K562 (cell line): ENCODE measurements at regions of chr11 and their contacts with region 1.

Region 1: DNA sequence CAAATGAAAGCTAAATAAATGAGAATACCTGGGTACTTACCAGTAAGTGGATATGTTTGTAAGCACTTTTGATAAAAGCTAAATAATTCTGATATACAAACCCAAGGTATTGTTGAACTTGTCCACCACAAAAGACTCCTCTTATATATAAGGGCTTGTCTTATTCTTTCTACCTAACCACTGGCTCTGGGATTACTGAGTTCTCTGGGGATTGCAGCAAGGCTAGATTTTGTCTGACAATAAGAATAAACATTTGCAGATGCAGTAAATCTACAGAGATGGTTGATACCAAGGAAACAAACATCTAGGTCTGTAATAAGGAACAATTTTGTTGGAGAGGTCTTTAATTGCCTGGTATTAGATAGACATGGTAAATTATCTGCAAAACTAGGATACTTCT is at the start of gene OR51A4:
- DNase-seq: no peak
- ATAC-seq: no peak
- H3K4me3 ChIP-seq: no peak within 1 kb of the TSS
- H3K27ac ChIP-seq: no peak within 1 kb of the TSS
- H3K4me1 ChIP-seq: no peaks in the 10 kb centered on the region
- H3K27me3 ChIP-seq: no peaks in the 10 kb centered on the region
- CTCF ChIP-seq: no peak
- EP300 ChIP-seq: no peak
- POLR2A ChIP-seq: no peak
- RAD21 ChIP-seq: no peak
- polyA plus RNA-seq, gene OR51A4: not detected

Region 2: DNA sequence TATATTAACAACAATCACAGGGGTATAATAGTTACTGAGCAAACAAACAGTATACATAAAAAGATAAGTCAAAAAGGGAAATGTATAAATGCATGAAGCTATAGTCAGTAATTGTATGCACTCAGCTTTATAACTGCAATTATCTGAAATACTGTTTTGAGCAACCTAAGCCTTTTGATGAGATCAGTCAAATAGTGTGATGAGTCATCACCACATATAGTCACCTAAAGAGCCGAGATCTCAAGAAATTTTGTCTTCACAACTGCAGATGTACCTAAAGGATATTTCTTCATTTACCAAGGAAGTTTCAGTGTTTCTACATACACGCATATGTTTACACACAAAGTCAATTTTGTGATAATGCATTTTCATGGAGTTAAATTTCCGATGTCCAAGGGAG is 13.4 kb after region 1 on chr11:
- CTCF ChIA-PET with region 1: no interaction called
- POLR2A ChIA-PET with region 1: no interaction called
- in situ Hi-C with region 1: no loop called
- intact Hi-C with region 1: loop called (anchors 1 kb)
- DNase-seq: no peak
- ATAC-seq: no peak
- H3K4me3 ChIP-seq: no peak overlapping the region
- H3K27ac ChIP-seq: no peak overlapping the region
- H3K4me1 ChIP-seq: no peaks in the 10 kb centered on the region
- H3K27me3 ChIP-seq: no peaks in the 10 kb centered on the region
- CTCF ChIP-seq: no peak
- EP300 ChIP-seq: no peak
- POLR2A ChIP-seq: no peak
- RAD21 ChIP-seq: no peak